Activated CD4-positive, alpha-beta T cell treated with anti-CD3 and anti-CD28 coated beads for 36 hours (primary cell): ENCODE measurements at regions of chr1 and their contacts with region 1.

Region 1: GRCh38 chr1:61043010-61043820 is 39.1 kb upstream of the NFIA start:
- DNase-seq: peak; percentile 93
- ATAC-seq: peak; percentile 98
- H3K4me3 Mint-ChIP-seq: peak overlapping the region; percentile 52
- H3K27ac Mint-ChIP-seq: no peak overlapping the region
- H3K4me1 Mint-ChIP-seq: no peaks in the 10 kb centered on the region
- H3K27me3 Mint-ChIP-seq: peaks cover 30% of the 10 kb centered on the region

Region 2: GRCh38 chr1:60156371-60156770 is 886.8 kb before region 1 on chr1:
- CTCF ChIA-PET with region 1: no interaction called
- POLR2A ChIA-PET with region 1: no interaction called
- intact Hi-C with region 1: loop called (anchors 2 to 5 kb)
- DNase-seq: no peak
- ATAC-seq: no peak
- H3K4me3 Mint-ChIP-seq: no peak overlapping the region
- H3K27ac Mint-ChIP-seq: no peak overlapping the region
- H3K4me1 Mint-ChIP-seq: no peaks in the 10 kb centered on the region
- H3K27me3 Mint-ChIP-seq: no peaks in the 10 kb centered on the region

Region 3: DNA sequence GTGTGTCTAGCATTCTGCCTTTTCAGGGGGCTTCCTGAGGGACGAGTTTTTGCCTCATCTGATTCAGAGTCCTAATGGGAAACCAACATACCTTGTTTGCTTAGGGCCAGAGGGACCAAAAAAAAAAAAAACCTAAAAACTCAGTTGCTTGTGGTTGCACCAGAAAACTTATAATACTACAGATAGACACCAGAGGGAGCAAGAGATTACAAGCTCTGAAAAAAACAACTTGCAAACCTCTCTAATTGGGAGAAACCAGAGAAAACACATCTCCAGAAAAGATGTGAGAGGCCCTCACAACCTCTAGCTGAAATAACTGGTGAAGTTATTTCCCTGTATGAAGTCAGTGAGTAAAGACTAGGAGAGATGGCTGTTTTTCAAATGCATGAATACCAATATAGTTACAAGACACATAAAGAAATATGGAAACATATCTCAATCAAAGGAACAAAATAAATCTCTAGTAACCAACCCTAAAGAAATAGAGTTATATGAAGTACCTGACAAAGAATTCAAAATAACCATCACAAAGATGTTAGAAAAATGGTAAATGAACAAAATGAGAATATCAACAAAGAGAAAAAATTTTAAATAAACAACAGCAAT is 194.5 kb before region 1 on chr1:
- CTCF ChIA-PET with region 1: interaction called, 22 read pairs
- POLR2A ChIA-PET with region 1: no interaction called
- intact Hi-C with region 1: loop called (anchors 1 kb)
- DNase-seq: no peak
- ATAC-seq: no peak
- H3K4me3 Mint-ChIP-seq: no peak overlapping the region
- H3K27ac Mint-ChIP-seq: no peak overlapping the region
- H3K4me1 Mint-ChIP-seq: no peaks in the 10 kb centered on the region
- H3K27me3 Mint-ChIP-seq: peaks cover 10% of the 10 kb centered on the region

Region 4: DNA sequence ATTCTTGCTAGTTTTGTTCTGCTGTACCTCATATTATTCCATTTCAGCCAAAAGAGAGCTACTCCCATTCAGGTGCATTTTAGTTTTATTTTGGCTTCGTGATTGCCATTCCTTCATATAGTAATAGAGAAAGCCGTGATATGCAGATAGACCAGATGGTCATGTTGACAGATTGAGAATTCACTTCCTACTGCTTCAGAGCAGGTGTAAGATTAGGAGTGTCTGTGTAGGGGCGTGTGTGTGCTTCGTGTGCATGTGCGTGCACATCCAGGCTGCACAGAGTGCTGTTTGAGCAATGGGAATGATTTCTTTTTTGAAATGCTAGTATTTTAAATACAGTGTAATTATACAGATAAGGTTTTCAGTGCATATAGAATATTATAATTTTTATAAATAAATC is 49.4 kb after region 1 on chr1:
- CTCF ChIA-PET with region 1: interaction called, 10 read pairs
- POLR2A ChIA-PET with region 1: no interaction called
- intact Hi-C with region 1: no loop called
- DNase-seq: no peak
- ATAC-seq: no peak
- H3K4me3 Mint-ChIP-seq: no peak overlapping the region
- H3K27ac Mint-ChIP-seq: no peak overlapping the region
- H3K4me1 Mint-ChIP-seq: peaks cover 8% of the 10 kb centered on the region
- H3K27me3 Mint-ChIP-seq: peaks cover 5% of the 10 kb centered on the region

Region 5: DNA sequence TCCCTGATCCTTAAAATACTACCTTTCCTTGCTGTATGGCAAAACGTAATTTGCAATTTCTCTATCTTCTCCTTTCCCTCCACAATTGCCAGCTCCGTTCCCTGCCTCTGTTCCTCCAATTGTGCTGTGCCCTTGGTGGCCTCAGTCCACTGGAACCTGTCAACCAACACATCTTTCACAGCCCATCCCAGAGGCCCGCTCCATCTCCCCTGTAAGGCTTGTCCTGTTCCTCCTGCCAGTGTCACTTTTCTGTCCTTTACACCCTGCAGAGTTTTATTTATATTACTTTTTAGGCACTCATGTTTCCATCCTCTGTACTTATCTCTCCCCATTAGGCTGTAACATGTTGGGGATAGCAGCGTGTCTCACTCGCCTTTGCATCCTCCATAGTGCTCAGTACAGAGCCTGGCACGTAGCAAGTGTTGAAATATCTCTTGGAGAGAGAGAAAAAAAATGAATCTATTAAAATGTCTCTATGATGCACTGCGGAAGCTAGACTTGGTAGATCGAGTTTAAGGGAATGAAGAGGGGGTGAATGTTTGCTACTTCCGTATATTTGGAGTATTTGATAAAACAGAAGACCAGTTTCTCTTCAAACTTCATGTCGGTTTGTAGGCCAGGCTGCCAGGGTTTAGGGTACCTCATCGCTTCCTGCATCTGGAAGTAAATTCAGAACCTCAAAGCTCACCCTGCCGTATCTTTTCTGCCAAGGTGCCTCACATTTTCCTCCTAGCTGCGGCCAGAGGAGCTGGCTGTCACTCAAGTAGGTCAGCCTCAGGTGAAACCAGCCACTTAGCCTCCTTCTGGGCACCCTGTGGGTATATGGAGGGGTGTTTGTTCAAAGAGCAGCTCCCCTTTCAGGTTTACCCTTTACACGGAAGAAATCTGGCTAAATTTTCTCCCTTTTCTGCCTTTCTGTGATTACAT is 378.0 kb after region 1 on chr1:
- CTCF ChIA-PET with region 1: no interaction called
- POLR2A ChIA-PET with region 1: no interaction called
- intact Hi-C with region 1: no loop called
- DNase-seq: no peak
- ATAC-seq: no peak
- H3K4me3 Mint-ChIP-seq: no peak overlapping the region
- H3K27ac Mint-ChIP-seq: no peak overlapping the region
- H3K4me1 Mint-ChIP-seq: no peaks in the 10 kb centered on the region
- H3K27me3 Mint-ChIP-seq: no peaks in the 10 kb centered on the region

Region 6: DNA sequence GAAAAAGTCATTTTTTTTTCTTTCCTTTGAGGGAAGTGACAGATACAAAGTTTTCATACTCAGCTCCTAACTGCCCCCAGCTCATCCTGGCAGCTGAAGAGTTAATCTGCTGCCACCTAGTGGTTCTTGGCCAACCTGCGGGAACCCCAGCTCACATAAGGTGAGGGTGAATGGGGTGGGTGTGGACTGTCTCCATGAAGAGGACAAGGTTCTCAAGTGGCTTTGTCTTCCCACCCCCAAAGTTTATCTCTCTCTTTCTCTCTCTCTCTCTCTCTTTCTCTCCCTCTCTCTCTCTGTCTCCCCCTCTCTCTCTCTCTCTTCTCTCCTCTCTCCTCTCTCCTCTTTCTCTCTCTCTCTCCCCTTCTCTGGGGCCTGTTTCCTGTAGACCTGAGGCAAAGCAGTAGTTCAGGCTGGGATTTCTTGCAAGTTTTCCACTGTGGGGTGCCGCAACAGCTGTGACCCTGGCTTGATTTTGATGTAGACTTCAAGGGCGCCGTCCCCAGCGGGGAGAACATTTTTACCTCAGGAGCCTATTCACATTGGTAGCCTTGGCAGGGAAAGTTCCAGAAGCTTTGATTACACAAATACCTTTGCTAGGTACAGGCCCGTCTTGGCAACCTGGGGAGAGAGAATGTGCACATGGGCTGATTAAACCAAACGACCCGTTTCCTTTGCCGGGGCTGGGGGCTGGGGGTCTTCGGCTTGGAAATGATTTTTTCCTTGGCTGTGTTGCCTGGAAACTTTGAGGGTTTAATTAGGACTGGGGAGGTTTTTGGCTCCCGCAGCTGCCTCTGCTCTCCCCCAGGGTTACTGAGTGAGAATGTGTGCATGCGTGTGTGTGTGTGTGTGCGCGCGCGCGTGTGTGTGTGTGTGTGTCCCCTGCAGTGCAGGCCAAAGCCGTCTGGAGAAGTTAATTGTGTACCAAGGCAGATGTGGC is 545.8 kb after region 1 on chr1:
- CTCF ChIA-PET with region 1: interaction called, 7 read pairs
- POLR2A ChIA-PET with region 1: no interaction called
- intact Hi-C with region 1: loop called in 1 of 2 experiments (anchors 2 kb)
- DNase-seq: peak; percentile 81
- ATAC-seq: peak; percentile 97
- H3K4me3 Mint-ChIP-seq: no peak overlapping the region
- H3K27ac Mint-ChIP-seq: no peak overlapping the region
- H3K4me1 Mint-ChIP-seq: no peaks in the 10 kb centered on the region
- H3K27me3 Mint-ChIP-seq: peaks cover 5% of the 10 kb centered on the region